Astrocyte of the cerebellum (primary cell): ENCODE measurements at regions of chr5 and their contacts with region 1.

Region 1: DNA sequence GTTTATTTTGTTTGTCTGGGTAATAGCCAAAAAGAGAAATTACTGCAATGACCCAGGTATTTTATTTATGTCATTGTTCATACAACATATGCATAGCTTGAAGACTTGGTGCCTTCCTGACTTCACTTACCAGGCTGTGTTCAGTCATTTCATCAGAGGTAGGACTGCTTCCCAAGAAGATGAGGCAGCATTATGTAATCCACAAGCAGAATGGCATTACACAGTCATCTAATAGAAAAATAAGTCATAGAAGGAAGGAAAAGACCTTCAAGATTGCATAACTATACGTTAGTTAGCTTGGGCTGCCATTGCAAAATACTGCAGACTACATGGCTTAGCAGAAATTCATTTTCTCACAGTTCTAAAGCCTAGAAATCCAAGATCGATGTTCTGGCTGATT is 167.5 kb downstream of the NMUR2 start:
- DNase-seq: no peak
- H3K4me3 ChIP-seq: no peak overlapping the region
- CTCF ChIP-seq: no peak

Region 2: GRCh38 chr5:151868451-151868850 is 369.1 kb before region 1 on chr5:
- in situ Hi-C with region 1: no loop called
- DNase-seq: no peak
- H3K4me3 ChIP-seq: no peak overlapping the region
- CTCF ChIP-seq: no peak

Region 3: DNA sequence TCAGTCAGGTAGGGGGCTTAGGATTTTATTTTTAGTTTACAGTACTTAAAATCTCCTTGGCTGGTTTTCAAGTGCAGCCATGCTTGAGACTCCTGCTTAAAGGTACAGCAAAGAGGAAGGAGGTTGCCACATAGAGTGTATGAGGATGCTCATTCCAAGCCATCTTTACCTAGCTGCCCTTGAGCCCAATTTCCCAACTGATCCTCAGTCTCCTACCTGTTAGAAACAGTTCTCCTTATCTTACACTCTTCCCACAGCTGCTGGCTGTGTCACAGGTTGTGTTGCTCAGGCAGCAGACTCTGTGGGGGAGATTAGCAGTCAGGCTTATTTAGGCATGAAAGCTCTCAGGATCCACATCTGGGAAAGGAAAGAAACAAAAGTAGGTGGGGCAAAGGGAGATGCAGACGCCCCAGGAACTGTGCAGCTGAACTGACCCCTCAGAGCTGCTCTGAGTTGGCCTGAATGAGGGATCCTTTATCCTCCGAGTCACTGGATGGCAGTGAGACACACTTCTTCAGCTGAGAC is 72.5 kb after region 1 on chr5:
- in situ Hi-C with region 1: loop called (anchors 10 kb)
- DNase-seq: no peak
- H3K4me3 ChIP-seq: no peak overlapping the region
- CTCF ChIP-seq: no peak